ENCODE measurements at regions of chr1 and their contacts with region 1.

Region 1: DNA sequence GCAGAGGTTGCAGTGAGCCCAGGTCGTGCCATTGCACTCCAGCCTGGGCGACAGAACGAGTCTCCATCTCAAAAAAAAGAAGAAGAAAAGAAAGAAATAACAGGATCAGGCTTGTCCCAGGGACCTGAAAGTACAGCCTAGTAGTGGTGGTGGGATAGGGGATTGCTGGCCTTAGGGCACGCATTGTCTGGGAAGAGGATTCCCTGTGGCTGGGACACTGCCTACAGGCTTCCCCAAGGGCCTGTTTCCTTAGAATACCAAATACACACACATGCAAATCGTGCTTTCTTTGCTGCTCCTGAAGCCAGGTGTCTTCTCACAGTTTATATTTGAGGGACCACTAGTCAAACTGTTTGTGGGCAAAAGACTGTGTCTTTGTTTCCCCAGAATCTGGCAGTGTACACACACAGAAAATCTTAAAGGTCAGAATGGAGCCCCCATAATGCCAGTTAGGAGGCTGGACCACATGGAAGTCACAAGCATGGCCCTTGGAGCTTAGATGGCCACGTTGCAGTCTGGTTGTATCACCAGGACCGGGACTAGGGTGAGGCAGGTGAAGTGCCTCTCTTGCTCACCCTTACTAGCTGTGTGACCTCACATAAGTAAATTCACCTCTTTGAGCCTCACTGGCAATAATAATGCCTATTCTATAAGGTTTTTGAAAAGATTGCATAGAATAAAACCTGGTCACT is 12.7 kb upstream of the ASAP3 start:
- DNase-seq: no peak
- H3K4me3 Mint-ChIP-seq: no peak overlapping the region
- H3K27ac Mint-ChIP-seq: no peak overlapping the region
- H3K4me1 Mint-ChIP-seq: peaks cover 5% of the 10 kb centered on the region
- H3K27me3 Mint-ChIP-seq: peaks cover 46% of the 10 kb centered on the region

Region 2: GRCh38 chr1:23436520-23437354 is 59.9 kb before region 1 on chr1:
- CTCF ChIA-PET with region 1: no interaction called
- DNase-seq: peak; percentile 52
- H3K4me3 Mint-ChIP-seq: no peak overlapping the region
- H3K27ac Mint-ChIP-seq: no peak overlapping the region
- H3K4me1 Mint-ChIP-seq: no peaks in the 10 kb centered on the region
- H3K27me3 Mint-ChIP-seq: peaks cover 56% of the 10 kb centered on the region

Region 3: GRCh38 chr1:23507507-23507906 is 10.9 kb after region 1 on chr1:
- CTCF ChIA-PET with region 1: interaction called, 34 read pairs
- DNase-seq: no peak
- H3K4me3 Mint-ChIP-seq: no peak overlapping the region
- H3K27ac Mint-ChIP-seq: peak overlapping the region; percentile 14
- H3K4me1 Mint-ChIP-seq: no peaks in the 10 kb centered on the region
- H3K27me3 Mint-ChIP-seq: no peaks in the 10 kb centered on the region

Region 4: GRCh38 chr1:23530747-23531561 is 34.3 kb after region 1 on chr1 and contains the start of gene E2F2:
- CTCF ChIA-PET with region 1: interaction called, 220 read pairs
- DNase-seq: peak; percentile 89
- H3K4me3 Mint-ChIP-seq: peak within 1 kb of the TSS; percentile 95
- H3K27ac Mint-ChIP-seq: peak within 1 kb of the TSS; percentile 96
- H3K4me1 Mint-ChIP-seq: peaks cover 76% of the 10 kb centered on the region
- H3K27me3 Mint-ChIP-seq: no peaks in the 10 kb centered on the region

Region 5: GRCh38 chr1:23634842-23635651 is 138.4 kb after region 1 on chr1:
- CTCF ChIA-PET with region 1: interaction called, 50 read pairs
- DNase-seq: peak; percentile 69
- H3K4me3 Mint-ChIP-seq: peak overlapping the region; percentile 29
- H3K27ac Mint-ChIP-seq: peak overlapping the region; percentile 60
- H3K4me1 Mint-ChIP-seq: peaks cover 27% of the 10 kb centered on the region
- H3K27me3 Mint-ChIP-seq: peaks cover 25% of the 10 kb centered on the region